IMR-90 (cell line): ENCODE measurements at regions of chr16 and their contacts with region 1.

Region 1: GRCh38 chr16:10964039-10964890 is 19.9 kb downstream of the CLEC16A start:
- DNase-seq: peak; percentile 86
- ATAC-seq: peak; percentile 85
- H3K4me3 ChIP-seq: no peak overlapping the region
- H3K27ac ChIP-seq: peak overlapping the region; percentile 8; the same call in 1 of the 2 replicates
- H3K4me1 ChIP-seq: peaks cover 20% of the 10 kb centered on the region
- H3K27me3 ChIP-seq: no peaks in the 10 kb centered on the region
- CTCF ChIP-seq: peak; percentile 98
- POLR2A ChIP-seq: peak; percentile 35; the same call in 1 of the 2 replicates
- RAD21 ChIP-seq: peak; percentile 98

Region 2: DNA sequence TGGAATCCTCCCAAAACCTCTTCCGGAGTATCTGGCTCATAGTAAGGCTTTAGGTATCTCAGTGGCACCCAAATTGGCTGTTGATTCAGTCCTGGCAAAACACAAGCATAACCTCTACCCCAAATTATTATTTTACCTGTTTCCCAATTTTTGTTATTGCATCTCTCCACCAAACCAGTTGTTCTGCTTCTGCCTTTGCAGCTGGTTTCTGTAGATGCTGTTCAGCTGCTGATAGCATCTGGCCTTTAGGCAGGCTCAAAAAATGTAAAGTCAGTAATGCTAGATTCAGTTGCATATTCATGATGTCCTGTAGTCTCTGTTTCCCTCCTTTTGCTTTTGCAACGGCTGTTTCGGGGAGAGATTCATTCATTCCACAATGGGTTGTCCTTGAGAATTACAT is 544.6 kb before region 1 on chr16:
- CTCF ChIA-PET with region 1: no interaction called
- POLR2A ChIA-PET with region 1: no interaction called
- dilution Hi-C with region 1: no loop called
- in situ Hi-C with region 1: no loop called
- intact Hi-C with region 1: no loop called
- DNase-seq: no peak
- ATAC-seq: no peak
- H3K4me3 ChIP-seq: no peak overlapping the region
- H3K27ac ChIP-seq: no peak overlapping the region
- H3K4me1 ChIP-seq: no peaks in the 10 kb centered on the region
- H3K27me3 ChIP-seq: no peaks in the 10 kb centered on the region
- CTCF ChIP-seq: no peak
- POLR2A ChIP-seq: no peak
- RAD21 ChIP-seq: no peak

Region 3: DNA sequence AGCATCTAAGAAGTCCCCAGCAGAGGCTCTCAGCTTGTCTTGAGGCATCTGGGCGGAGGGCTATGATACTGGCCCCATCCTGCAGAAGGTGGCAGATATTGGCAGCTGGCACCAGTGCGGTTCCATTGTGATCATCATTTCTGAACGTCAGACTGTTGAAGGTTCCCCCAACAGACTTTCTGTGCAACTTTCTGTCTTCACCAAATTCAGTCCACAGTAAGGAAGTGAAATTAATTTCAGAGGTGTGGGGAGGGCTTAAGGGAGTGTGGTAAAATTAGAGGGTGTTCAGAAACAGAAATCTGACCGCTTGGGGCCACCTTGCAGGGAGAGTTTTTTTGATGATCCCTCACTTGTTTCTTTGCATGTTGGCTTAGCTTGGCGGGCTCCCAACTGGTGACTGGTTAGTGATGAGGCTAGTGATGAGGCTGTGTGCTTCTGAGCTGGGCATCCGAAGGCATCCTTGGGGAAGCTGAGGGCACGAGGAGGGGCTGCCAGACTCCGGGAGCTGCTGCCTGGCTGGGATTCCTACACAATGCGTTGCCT is 87.4 kb before region 1 on chr16 and contains the start of gene CIITA:
- CTCF ChIA-PET with region 1: no interaction called
- POLR2A ChIA-PET with region 1: no interaction called
- dilution Hi-C with region 1: no loop called
- in situ Hi-C with region 1: no loop called
- intact Hi-C with region 1: no loop called
- DNase-seq: peak; percentile 86
- ATAC-seq: peak; percentile 33; the same call in 1 of the 2 replicates
- H3K4me3 ChIP-seq: no peak within 1 kb of the TSS
- H3K27ac ChIP-seq: no peak within 1 kb of the TSS
- H3K4me1 ChIP-seq: no peaks in the 10 kb centered on the region
- H3K27me3 ChIP-seq: peaks cover 44% of the 10 kb centered on the region
- CTCF ChIP-seq: no peak
- POLR2A ChIP-seq: no peak
- RAD21 ChIP-seq: no peak
- total RNA-seq, gene CIITA: not detected in 2 replicates

Region 4: GRCh38 chr16:11356573-11357331 is 392.5 kb after region 1 on chr16:
- CTCF ChIA-PET with region 1: interaction called, 4 read pairs
- POLR2A ChIA-PET with region 1: no interaction called
- dilution Hi-C with region 1: no loop called
- in situ Hi-C with region 1: loop called (anchors 5 kb)
- intact Hi-C with region 1: loop called (anchors 1 kb)
- DNase-seq: peak; percentile 61
- ATAC-seq: peak; percentile 67
- H3K4me3 ChIP-seq: no peak overlapping the region
- H3K27ac ChIP-seq: peak overlapping the region; percentile 44; the same call in 1 of the 2 replicates
- H3K4me1 ChIP-seq: peaks cover 45% of the 10 kb centered on the region
- H3K27me3 ChIP-seq: no peaks in the 10 kb centered on the region
- CTCF ChIP-seq: peak; percentile 77
- POLR2A ChIP-seq: no peak
- RAD21 ChIP-seq: peak; percentile 80

Region 5: DNA sequence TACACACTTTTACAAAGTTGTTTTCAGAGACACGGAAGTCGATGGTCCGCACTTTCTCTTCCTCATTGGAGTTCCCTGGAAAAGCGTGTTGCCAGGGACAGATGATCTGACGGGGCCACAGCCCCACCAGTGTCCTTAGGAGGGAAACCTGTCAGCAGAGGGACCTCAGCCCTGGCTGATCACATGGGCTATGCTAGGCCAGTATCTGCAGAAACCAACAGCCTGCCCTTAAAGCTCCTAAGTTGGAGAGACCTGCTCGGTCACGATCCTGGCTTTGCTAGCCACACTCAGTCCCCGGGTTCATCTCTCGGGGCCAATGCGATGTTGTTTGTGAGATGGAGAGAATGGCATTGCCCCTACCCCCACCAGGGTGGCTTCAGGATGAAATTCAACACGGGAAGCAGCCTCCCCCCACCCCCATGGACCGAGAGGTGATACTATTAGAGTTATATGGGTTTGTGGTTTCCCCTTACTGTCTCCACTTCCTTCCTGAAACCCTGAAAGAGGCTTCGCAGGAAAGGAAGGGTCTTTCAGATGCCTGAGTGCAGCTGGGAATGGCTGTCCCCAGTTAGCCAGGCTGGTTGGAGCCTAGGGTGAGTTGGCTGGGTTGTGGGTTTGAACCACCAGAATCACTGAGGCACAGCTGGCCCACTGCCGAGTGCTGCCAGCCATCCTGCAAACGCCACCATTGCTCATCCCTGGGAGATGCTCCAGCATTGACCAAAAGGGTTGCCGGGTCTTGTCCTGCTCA is 397.6 kb after region 1 on chr16:
- CTCF ChIA-PET with region 1: interaction called, 4 read pairs
- POLR2A ChIA-PET with region 1: no interaction called
- dilution Hi-C with region 1: no loop called
- in situ Hi-C with region 1: loop called (anchors 5 kb)
- intact Hi-C with region 1: no loop called
- DNase-seq: no peak
- ATAC-seq: no peak
- H3K4me3 ChIP-seq: no peak overlapping the region
- H3K27ac ChIP-seq: peak overlapping the region; percentile 64; the same call in 1 of the 2 replicates
- H3K4me1 ChIP-seq: peaks cover 43% of the 10 kb centered on the region
- H3K27me3 ChIP-seq: no peaks in the 10 kb centered on the region
- CTCF ChIP-seq: no peak
- POLR2A ChIP-seq: no peak
- RAD21 ChIP-seq: no peak

Region 6: GRCh38 chr16:11535471-11535870 is 571.2 kb after region 1 on chr16:
- CTCF ChIA-PET with region 1: interaction called, 3 read pairs
- POLR2A ChIA-PET with region 1: no interaction called
- dilution Hi-C with region 1: no loop called
- in situ Hi-C with region 1: loop called (anchors 25 kb)
- intact Hi-C with region 1: loop called (anchors 5 kb)
- DNase-seq: no peak
- ATAC-seq: no peak
- H3K4me3 ChIP-seq: no peak overlapping the region
- H3K27ac ChIP-seq: no peak overlapping the region
- H3K4me1 ChIP-seq: peaks cover 5% of the 10 kb centered on the region; the same call in 1 of the 2 replicates
- H3K27me3 ChIP-seq: no peaks in the 10 kb centered on the region
- CTCF ChIP-seq: no peak
- POLR2A ChIP-seq: no peak
- RAD21 ChIP-seq: no peak

Region 7: GRCh38 chr16:11546608-11547061 is 582.4 kb after region 1 on chr16:
- CTCF ChIA-PET with region 1: no interaction called
- POLR2A ChIA-PET with region 1: no interaction called
- dilution Hi-C with region 1: no loop called
- in situ Hi-C with region 1: loop called (anchors 25 kb)
- intact Hi-C with region 1: no loop called
- DNase-seq: peak; percentile 85
- ATAC-seq: peak; percentile 92
- H3K4me3 ChIP-seq: no peak overlapping the region
- H3K27ac ChIP-seq: peak overlapping the region; percentile 59; the same call in 1 of the 2 replicates
- H3K4me1 ChIP-seq: peaks cover 8% of the 10 kb centered on the region
- H3K27me3 ChIP-seq: no peaks in the 10 kb centered on the region
- CTCF ChIP-seq: no peak
- POLR2A ChIP-seq: no peak
- RAD21 ChIP-seq: no peak

Region 8: GRCh38 chr16:11715246-11715947 is 751.1 kb after region 1 on chr16:
- CTCF ChIA-PET with region 1: interaction called, 4 read pairs
- POLR2A ChIA-PET with region 1: no interaction called
- dilution Hi-C with region 1: no loop called
- in situ Hi-C with region 1: loop called (anchors 10 kb)
- intact Hi-C with region 1: loop called (anchors 10 kb)
- DNase-seq: no peak
- ATAC-seq: no peak
- H3K4me3 ChIP-seq: no peak overlapping the region
- H3K27ac ChIP-seq: no peak overlapping the region
- H3K4me1 ChIP-seq: peaks cover 2% of the 10 kb centered on the region; the same call in 1 of the 2 replicates
- H3K27me3 ChIP-seq: no peaks in the 10 kb centered on the region
- CTCF ChIP-seq: no peak
- POLR2A ChIP-seq: no peak
- RAD21 ChIP-seq: no peak

Region 9: GRCh38 chr16:11797166-11797956 is 833.1 kb after region 1 on chr16 and contains the start of gene ZC3H7A:
- CTCF ChIA-PET with region 1: no interaction called
- POLR2A ChIA-PET with region 1: no interaction called
- dilution Hi-C with region 1: no loop called
- in situ Hi-C with region 1: loop called (anchors 25 kb)
- intact Hi-C with region 1: no loop called
- DNase-seq: peak; percentile 97
- ATAC-seq: peak; percentile 95
- H3K4me3 ChIP-seq: peak within 1 kb of the TSS; percentile 73
- H3K27ac ChIP-seq: peak within 1 kb of the TSS; percentile 95
- H3K4me1 ChIP-seq: peaks cover 27% of the 10 kb centered on the region
- H3K27me3 ChIP-seq: no peaks in the 10 kb centered on the region
- CTCF ChIP-seq: peak; percentile 83
- POLR2A ChIP-seq: peak; percentile 96
- RAD21 ChIP-seq: no peak
- total RNA-seq, gene ZC3H7A: 22.2 and 33.3 TPM in 2 replicates